ENCODE measurements at regions of chr2 and their contacts with region 1.

Region 1: GRCh38 chr2:70190418-70191243 is at the start of gene C2orf42:
- DNase-seq: peak; percentile 87 to 97 (median 96)
- ATAC-seq: peak; percentile 94
- H3K4me3 ChIP-seq: peak within 1 kb of the TSS; percentile 72
- H3K4me3 Mint-ChIP-seq: peak within 1 kb of the TSS; percentile 86 to 97 (median 93)
- H3K27ac ChIP-seq: peak within 1 kb of the TSS; percentile 93
- H3K27ac Mint-ChIP-seq: peak within 1 kb of the TSS; percentile 94 to 100 (median 99)
- H3K4me1 ChIP-seq: peaks cover 0 to 8% of the 10 kb centered on the region in 2 donors
- H3K4me1 Mint-ChIP-seq: peaks cover 7 to 24% (median 21%) of the 10 kb centered on the region in 7 donors
- H3K27me3 ChIP-seq: no peaks in the 10 kb centered on the region
- H3K27me3 Mint-ChIP-seq: peaks cover 0 to 2% (median 0%) of the 10 kb centered on the region in 5 donors
- total RNA-seq, gene C2orf42: 20.6 to 45.9 (median 30.3) TPM

Region 2: DNA sequence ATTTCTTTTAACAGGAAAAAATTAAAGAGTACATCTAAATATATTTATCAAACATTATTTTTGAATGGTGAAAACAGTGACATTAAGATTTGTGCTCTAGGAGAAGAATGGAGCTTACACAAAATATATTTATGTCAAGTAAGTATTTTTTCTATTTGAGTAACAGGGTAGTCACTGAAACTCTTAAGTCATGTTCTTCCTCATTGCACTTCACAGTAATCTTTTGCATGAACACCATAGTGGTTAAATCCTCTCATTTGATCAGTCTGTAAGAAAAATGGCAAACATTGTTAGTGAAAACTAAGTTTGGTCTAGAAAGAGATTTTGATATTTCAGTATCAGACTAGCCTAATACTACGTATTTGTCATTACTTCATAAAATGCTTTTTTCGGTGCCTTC is 353.1 kb before region 1 on chr2:
- CTCF ChIA-PET with region 1: no interaction called
- POLR2A ChIA-PET with region 1: no interaction called
- intact Hi-C with region 1: no loop called
- DNase-seq: no peak
- ATAC-seq: no peak
- H3K4me3 ChIP-seq: no peak overlapping the region
- H3K4me3 Mint-ChIP-seq: no peak overlapping the region
- H3K27ac ChIP-seq: no peak overlapping the region
- H3K27ac Mint-ChIP-seq: no peak overlapping the region
- H3K4me1 ChIP-seq: no peaks in the 10 kb centered on the region
- H3K4me1 Mint-ChIP-seq: peaks cover 36 to 47% (median 42%) of the 10 kb centered on the region in 7 donors
- H3K27me3 ChIP-seq: no peaks in the 10 kb centered on the region
- H3K27me3 Mint-ChIP-seq: no peaks in the 10 kb centered on the region

Region 3: DNA sequence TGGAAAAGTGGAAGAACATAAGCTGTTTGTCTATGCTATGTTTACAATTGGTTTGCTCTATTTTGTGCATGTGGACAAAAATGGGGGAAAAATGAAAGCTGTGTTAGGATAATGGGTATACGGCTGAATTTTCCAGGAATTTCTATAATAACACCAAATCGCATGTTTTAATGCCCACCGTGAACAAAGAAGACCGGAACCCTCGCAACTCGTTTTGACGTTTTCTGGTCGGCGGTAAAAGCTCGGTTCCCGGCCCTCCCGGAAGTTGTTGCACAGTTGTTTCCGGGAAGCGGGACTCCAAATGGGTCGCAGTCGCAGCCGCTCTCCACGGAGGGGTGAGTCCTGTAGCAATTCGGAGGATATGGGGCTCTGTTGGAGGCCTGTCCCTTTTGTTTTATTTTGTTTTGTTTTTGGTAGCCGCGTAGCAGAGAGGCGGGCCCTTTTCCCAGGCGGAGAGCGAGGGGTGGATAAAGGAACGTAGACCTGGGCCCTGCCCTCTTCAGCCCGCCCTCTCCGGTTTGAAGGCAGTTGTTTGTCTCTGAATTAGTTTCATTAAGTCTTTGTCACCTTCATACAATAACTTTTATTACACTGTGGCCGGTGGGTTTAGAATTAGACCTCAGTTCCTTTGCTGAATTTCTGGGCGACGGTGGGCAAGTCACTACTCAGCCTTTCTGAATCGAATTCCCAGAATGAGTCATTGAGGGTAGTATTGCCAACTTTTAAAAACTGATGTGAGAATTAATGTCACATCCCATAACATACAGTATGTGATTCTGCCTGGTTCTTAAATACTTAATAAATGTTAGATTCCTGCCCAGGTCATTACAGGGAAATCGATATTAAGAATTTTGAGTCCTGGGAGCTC is 296.7 kb before region 1 on chr2 and contains the start of gene SNRNP27:
- CTCF ChIA-PET with region 1: no interaction called
- POLR2A ChIA-PET with region 1: interaction called, 8 read pairs
- intact Hi-C with region 1: loop called in 1 of 2 experiments (anchors 1 kb)
- DNase-seq: peak; percentile 62 to 84 (median 77)
- ATAC-seq: peak; percentile 90
- H3K4me3 ChIP-seq: peak within 1 kb of the TSS; percentile 67
- H3K4me3 Mint-ChIP-seq: peak within 1 kb of the TSS; percentile 90 to 100 (median 99)
- H3K27ac ChIP-seq: peak within 1 kb of the TSS; percentile 91
- H3K27ac Mint-ChIP-seq: peak within 1 kb of the TSS; percentile 93 to 100 (median 99)
- H3K4me1 ChIP-seq: peaks cover 12 to 17% of the 10 kb centered on the region in 2 donors
- H3K4me1 Mint-ChIP-seq: peaks cover 12 to 56% (median 43%) of the 10 kb centered on the region in 7 donors
- H3K27me3 ChIP-seq: no peaks in the 10 kb centered on the region
- H3K27me3 Mint-ChIP-seq: no peaks in the 10 kb centered on the region
- total RNA-seq, gene SNRNP27: 32.5 to 56.0 (median 51.5) TPM

Region 4: DNA sequence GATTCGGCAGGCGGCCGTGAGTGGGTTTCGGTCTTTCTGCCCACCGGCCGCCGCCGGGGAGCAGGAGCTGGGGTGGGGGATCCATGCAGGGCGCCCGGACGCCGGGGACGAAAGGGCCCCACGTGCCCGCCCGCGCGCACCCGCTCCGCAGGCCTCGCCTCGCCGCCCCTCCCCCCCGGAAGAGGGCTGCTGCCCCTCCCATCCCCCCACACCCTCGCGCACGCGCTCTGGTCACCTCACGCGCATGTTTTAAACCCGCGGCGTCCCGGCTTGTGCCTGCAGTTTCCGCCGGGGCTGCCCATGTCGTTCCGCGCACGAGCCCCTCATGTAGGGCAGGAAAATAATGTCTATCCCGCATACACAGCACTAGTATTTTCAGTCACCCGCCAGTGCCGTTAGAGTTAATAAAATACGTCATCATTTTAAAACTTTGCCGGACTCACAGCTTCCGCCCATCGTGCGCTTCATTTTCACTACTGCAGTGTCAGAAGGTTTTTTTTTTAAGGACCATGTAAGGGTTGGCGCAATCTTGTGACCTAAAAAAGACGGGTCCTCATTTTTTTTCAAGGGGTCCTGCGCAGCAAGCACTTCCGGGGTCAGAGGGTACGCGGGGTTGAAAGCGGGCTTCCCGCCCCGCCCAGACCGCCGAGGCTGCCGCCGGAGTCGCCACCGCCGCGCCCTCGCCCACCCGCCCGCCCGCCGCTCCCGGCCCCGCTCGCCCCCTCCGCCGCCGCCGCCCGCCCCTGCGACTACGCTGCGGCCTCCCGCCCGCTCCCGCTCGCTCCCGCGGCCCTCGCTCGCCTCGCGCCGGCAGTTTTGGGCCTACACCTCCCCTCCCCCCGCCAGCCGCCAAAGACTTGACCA is 103.6 kb before region 1 on chr2 and contains the start of gene PCBP1:
- CTCF ChIA-PET with region 1: interaction called, 3 read pairs
- POLR2A ChIA-PET with region 1: interaction called, 7 read pairs
- intact Hi-C with region 1: loop called (anchors 1 kb)
- DNase-seq: peak; percentile 94 to 100 (median 98)
- ATAC-seq: peak; percentile 83
- H3K4me3 ChIP-seq: peak within 1 kb of the TSS; percentile 86
- H3K4me3 Mint-ChIP-seq: peak within 1 kb of the TSS; percentile 91 to 98 (median 97)
- H3K27ac ChIP-seq: peak within 1 kb of the TSS; percentile 100
- H3K27ac Mint-ChIP-seq: peak within 1 kb of the TSS; percentile 99 to 100 (median 100)
- H3K4me1 ChIP-seq: peaks cover 55 to 59% of the 10 kb centered on the region in 2 donors
- H3K4me1 Mint-ChIP-seq: peaks cover 40 to 67% (median 59%) of the 10 kb centered on the region in 7 donors
- H3K27me3 ChIP-seq: no peaks in the 10 kb centered on the region
- H3K27me3 Mint-ChIP-seq: peaks cover 0 to 4% (median 0%) of the 10 kb centered on the region in 5 donors
- total RNA-seq, gene PCBP1: 257 to 487 (median 368) TPM

Region 5: DNA sequence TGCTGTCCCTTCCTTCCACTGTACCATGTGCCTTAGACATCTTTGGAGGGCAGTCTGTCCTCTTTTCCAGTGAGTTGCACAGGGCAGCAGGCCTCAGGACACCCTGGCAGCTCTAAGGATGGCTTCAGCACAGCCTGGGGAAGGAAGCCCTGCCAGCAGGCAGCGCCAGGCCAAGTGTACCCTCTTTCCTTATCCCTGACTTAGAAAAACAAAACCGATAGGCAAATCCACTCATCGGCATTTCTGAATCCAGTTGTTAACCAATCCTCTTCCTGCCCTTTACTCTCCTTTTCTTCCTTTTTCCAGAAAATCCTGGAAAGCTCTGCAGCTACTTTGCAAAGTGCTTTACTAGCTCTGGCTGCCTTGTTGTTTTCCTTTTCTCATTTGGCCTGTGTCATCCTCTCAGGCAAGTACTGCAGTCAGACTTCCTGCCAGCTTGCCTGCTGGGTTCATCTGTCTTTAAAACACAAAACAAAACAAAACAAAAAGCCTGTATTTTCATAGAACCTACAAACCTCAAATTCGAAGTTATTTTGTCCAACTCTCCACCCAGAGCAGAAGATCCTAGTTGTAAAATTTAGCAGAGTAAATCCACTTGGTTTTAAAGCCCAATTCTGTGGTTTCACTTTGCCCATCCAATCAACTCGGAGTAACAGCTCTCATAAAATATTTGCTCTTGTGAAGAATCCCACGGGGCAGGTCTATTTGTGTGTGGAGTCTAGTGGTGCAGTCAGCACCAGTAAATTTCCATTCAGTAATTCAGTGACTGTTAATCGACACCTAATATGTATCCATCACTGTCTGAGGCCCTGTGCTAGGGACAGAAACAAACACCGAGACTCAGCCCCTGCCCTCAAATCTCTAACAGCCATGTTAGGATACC is 58.1 kb before region 1 on chr2:
- CTCF ChIA-PET with region 1: no interaction called
- POLR2A ChIA-PET with region 1: interaction called, 19 read pairs
- intact Hi-C with region 1: no loop called
- DNase-seq: peak in 7 of 9 donors; percentile 63 to 77 (median 68)
- ATAC-seq: peak; percentile 66
- H3K4me3 ChIP-seq: peak overlapping the region; percentile 53
- H3K4me3 Mint-ChIP-seq: peak overlapping the region; percentile 81 to 94 (median 90)
- H3K27ac ChIP-seq: peak overlapping the region; percentile 85
- H3K27ac Mint-ChIP-seq: peak overlapping the region; percentile 95 to 99 (median 97)
- H3K4me1 ChIP-seq: peaks cover 66 to 74% of the 10 kb centered on the region in 2 donors
- H3K4me1 Mint-ChIP-seq: peaks cover 58 to 88% (median 79%) of the 10 kb centered on the region in 7 donors
- H3K27me3 ChIP-seq: no peaks in the 10 kb centered on the region
- H3K27me3 Mint-ChIP-seq: no peaks in the 10 kb centered on the region

Region 6: DNA sequence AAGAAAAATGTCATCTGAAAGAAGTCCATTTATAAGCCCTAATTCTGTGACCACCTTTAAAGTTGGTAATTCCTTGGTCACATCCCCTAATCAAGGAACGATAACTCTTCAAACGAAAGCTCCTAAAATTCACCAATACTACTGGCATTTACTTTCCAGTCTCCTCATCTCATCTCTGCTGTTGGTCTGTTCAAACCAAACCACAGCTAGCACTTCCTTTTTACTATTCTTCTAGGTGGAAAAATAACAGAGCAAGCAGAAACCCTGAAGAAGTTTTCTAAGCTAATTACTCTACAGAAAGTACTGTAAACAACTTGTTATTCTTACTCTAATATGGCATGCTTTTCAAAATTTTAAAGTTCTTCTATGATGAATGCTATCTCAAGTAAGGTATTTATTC is 36.1 kb after region 1 on chr2:
- CTCF ChIA-PET with region 1: no interaction called
- POLR2A ChIA-PET with region 1: no interaction called
- intact Hi-C with region 1: no loop called
- DNase-seq: no peak
- ATAC-seq: no peak
- H3K4me3 ChIP-seq: no peak overlapping the region
- H3K4me3 Mint-ChIP-seq: no peak overlapping the region
- H3K27ac ChIP-seq: no peak overlapping the region
- H3K27ac Mint-ChIP-seq: peak overlapping the region in 6 of 9 donors; percentile 10 to 76 (median 27)
- H3K4me1 ChIP-seq: no peaks in the 10 kb centered on the region
- H3K4me1 Mint-ChIP-seq: peaks cover 0 to 9% (median 3%) of the 10 kb centered on the region in 7 donors
- H3K27me3 ChIP-seq: no peaks in the 10 kb centered on the region
- H3K27me3 Mint-ChIP-seq: no peaks in the 10 kb centered on the region

Region 7: GRCh38 chr2:70248181-70248847 is 57.7 kb after region 1 on chr2 and contains the start of gene TIA1:
- CTCF ChIA-PET with region 1: no interaction called
- POLR2A ChIA-PET with region 1: interaction called, 7 read pairs
- intact Hi-C with region 1: loop called (anchors 1 kb)
- DNase-seq: peak; percentile 94 to 99 (median 98)
- ATAC-seq: peak; percentile 98
- H3K4me3 ChIP-seq: peak within 1 kb of the TSS; percentile 87
- H3K4me3 Mint-ChIP-seq: peak within 1 kb of the TSS; percentile 83 to 99 (median 95)
- H3K27ac ChIP-seq: peak within 1 kb of the TSS; percentile 95
- H3K27ac Mint-ChIP-seq: peak within 1 kb of the TSS; percentile 91 to 100 (median 97)
- H3K4me1 ChIP-seq: peaks cover 13 to 24% of the 10 kb centered on the region in 2 donors
- H3K4me1 Mint-ChIP-seq: peaks cover 23 to 48% (median 40%) of the 10 kb centered on the region in 7 donors
- H3K27me3 ChIP-seq: no peaks in the 10 kb centered on the region
- H3K27me3 Mint-ChIP-seq: peaks cover 0 to 4% (median 0%) of the 10 kb centered on the region in 5 donors
- total RNA-seq, gene TIA1: 80.9 to 244 (median 163) TPM

Region 8: DNA sequence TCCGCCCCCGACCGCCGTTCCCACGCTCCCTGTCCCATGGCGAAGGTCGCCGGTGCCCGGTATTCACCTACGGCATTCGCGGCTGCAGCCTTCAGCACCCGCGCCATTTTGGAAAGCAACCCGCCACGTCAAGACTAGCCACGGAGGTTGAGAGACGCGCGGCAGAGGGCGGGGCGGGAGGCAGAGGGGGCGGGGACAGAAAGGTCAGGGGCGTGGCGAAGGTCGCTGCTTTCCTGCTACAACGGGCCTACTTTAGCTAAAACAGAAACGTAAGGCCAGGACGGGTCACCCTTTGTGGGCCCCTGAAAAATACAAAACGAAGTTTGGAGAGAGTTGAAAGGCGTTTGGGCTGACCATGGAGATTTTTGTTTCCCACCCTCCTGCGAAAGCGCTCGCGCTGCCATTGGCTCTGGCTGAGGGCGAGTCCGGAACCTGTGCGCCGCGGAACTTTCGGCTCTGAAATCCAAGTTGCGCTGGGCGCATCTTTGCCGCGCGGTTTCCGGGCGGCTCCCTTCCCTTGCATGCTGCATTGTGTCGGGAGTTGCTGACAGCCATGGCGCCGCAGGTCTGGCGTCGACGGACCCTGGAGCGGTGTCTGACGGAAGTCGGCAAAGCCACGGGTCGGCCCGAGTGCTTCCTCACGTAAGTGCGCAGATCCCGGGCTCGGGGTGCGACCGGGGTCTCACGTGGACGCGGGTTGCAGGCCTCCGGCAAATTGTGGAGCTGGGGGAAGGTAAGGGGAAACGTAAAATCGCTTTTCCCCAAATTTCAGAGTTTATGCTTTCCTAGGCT is 939.7 kb after region 1 on chr2 and contains the starts of genes MCEE and MPHOSPH10:
- CTCF ChIA-PET with region 1: no interaction called
- POLR2A ChIA-PET with region 1: no interaction called
- intact Hi-C with region 1: loop called in 1 of 2 experiments (anchors 2 kb)
- DNase-seq: peak; percentile 81 to 91 (median 89)
- ATAC-seq: peak; percentile 95
- H3K4me3 ChIP-seq: peak within 1 kb of the TSS; percentile 74
- H3K4me3 Mint-ChIP-seq: no peak within 1 kb of the TSS
- H3K27ac ChIP-seq: peak within 1 kb of the TSS; percentile 87
- H3K27ac Mint-ChIP-seq: peak within 1 kb of the TSS in 1 of 9 donors; percentile 45
- H3K4me1 ChIP-seq: peaks cover 21 to 22% of the 10 kb centered on the region in 2 donors
- H3K4me1 Mint-ChIP-seq: peaks cover 5 to 33% (median 26%) of the 10 kb centered on the region in 7 donors
- H3K27me3 ChIP-seq: no peaks in the 10 kb centered on the region
- H3K27me3 Mint-ChIP-seq: no peaks in the 10 kb centered on the region
- total RNA-seq, gene MCEE: 11.6 to 27.9 (median 16.4) TPM
- total RNA-seq, gene MPHOSPH10: 28.2 to 58.9 (median 43.8) TPM

Measured in naive thymus-derived CD4-positive, alpha-beta T cell (primary cell).